CD4-positive, alpha-beta T cell (primary cell): ENCODE measurements at regions of chr2 and their contacts with region 1.

Region 1: DNA sequence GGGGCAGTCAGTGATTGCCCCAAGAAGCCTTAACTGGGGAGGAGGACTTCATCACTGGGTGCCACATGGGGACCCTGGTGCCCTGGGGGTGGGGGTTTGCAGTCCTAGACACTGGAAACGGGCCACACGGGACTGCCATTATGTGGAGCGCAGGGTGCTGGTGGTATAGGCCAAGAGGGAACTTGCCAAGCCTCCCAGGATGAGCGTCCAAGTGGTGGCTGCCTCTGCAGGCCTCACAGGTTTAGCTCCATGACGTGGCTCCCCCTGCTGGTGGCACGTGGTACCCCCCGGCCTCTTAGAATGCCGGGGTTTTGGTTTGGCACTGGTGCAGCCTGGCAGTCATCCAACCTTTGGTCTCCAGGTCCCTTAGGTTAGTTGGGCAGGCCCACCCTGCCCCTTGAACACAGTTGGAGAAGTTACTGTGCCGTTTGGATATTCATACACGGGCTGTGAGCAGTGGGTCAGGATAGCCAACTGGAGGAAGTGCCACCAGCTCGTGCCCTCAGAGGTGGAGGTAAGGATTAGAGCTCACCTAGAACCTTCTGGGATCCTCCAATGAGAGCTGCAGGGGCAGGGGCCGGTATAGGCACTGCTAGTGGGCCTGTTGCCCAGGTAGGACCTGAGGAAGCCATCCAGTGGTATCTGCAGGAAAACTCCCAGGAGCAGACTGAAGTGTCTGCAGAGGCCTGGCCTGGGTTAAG is 5.6 kb downstream of the PTMA start:
- DNase-seq: peak; percentile 86 to 96 (median 92)
- ATAC-seq: peak; percentile 47
- H3K4me3 ChIP-seq: no peak overlapping the region
- H3K4me3 Mint-ChIP-seq: peak overlapping the region; percentile 87
- H3K27ac ChIP-seq: peak overlapping the region; percentile 49 to 57
- H3K27ac Mint-ChIP-seq: peak overlapping the region; percentile 100
- H3K4me1 ChIP-seq: peaks cover 52% of the 10 kb centered on the region
- H3K4me1 Mint-ChIP-seq: peaks cover 42% of the 10 kb centered on the region
- H3K27me3 ChIP-seq: no peaks in the 10 kb centered on the region
- H3K27me3 Mint-ChIP-seq: peaks cover 4% of the 10 kb centered on the region
- CTCF ChIP-seq: peak; percentile 97

Region 2: DNA sequence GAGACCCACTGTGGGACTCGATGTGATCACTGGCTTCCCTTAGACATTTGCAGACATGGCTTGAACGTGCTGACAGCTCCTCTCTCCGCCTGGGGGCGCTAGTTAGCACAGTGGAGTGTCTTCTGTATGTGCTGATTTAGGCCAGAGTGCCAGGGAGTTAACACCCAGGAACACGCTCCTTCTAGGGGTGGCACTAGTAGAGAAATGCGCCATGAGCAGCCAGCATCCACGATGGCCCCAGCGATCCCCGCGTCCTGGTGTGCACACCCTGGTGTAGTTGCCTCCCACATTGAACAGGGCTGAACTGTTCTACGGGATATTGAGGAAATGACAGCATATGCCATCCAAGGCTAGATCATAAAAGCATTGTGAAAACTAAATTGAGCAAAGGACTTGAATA is 172.2 kb before region 1 on chr2:
- CTCF ChIA-PET with region 1: no interaction called
- POLR2A ChIA-PET with region 1: no interaction called
- intact Hi-C with region 1: no loop called
- DNase-seq: no peak
- ATAC-seq: no peak
- H3K4me3 ChIP-seq: no peak overlapping the region
- H3K4me3 Mint-ChIP-seq: no peak overlapping the region
- H3K27ac ChIP-seq: no peak overlapping the region
- H3K27ac Mint-ChIP-seq: no peak overlapping the region
- H3K4me1 ChIP-seq: peaks cover 21% of the 10 kb centered on the region
- H3K4me1 Mint-ChIP-seq: peaks cover 16% of the 10 kb centered on the region
- H3K27me3 ChIP-seq: no peaks in the 10 kb centered on the region
- H3K27me3 Mint-ChIP-seq: no peaks in the 10 kb centered on the region
- CTCF ChIP-seq: no peak

Region 3: DNA sequence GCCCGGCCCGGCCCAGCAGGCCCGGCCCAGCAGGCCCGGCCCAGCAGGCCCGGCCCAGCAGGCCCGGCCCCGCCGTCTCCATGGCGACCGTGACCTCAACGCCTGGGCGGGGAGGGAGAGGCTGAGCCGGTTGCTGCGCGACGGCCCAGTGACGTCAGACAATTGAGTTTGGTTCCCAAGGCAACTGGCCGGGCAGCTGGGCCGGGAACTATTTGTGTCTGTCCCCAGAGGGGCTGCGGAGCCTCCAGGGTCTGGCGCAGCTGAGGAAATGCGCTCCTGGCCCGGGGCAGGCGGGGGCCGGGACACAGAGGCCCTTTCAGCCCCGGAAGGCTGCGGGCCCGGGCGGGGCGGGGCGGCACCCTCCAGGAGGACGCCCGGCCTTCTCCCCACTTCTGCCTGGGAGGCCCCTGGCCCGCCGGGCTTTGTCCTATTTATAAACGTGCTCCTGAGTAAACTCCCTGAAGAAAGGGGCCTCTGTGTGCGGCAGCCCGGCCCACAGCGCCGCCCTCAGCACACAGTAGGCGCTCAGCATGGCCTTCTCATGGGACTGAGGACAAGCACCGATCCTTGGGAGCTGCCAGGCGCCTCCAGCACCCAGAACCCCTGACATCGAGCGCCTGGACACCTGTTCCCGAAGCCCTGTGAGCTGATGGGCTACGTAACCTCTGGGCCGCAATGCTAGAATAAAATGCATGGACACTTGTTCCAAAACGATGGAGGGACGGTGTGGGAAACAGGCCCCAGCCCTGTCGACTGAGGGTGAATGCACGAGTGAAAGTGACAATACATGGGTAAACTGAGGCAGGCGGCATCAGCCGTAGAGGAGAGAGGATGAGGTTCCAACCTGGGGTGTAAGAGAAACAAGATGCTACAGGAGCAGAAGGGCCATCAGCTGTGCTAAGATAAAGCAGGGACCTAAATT is 108.9 kb before region 1 on chr2:
- CTCF ChIA-PET with region 1: interaction called, 53 read pairs
- POLR2A ChIA-PET with region 1: interaction called, 5 read pairs
- intact Hi-C with region 1: no loop called
- DNase-seq: peak; percentile 86 to 99 (median 95)
- ATAC-seq: peak; percentile 79
- H3K4me3 ChIP-seq: peak overlapping the region; percentile 41
- H3K4me3 Mint-ChIP-seq: peak overlapping the region; percentile 65
- H3K27ac ChIP-seq: peak overlapping the region in 1 of 2 donors; percentile 45
- H3K27ac Mint-ChIP-seq: peak overlapping the region; percentile 74
- H3K4me1 ChIP-seq: peaks cover 23% of the 10 kb centered on the region
- H3K4me1 Mint-ChIP-seq: peaks cover 12% of the 10 kb centered on the region
- H3K27me3 ChIP-seq: no peaks in the 10 kb centered on the region
- H3K27me3 Mint-ChIP-seq: no peaks in the 10 kb centered on the region
- CTCF ChIP-seq: no peak

Region 4: DNA sequence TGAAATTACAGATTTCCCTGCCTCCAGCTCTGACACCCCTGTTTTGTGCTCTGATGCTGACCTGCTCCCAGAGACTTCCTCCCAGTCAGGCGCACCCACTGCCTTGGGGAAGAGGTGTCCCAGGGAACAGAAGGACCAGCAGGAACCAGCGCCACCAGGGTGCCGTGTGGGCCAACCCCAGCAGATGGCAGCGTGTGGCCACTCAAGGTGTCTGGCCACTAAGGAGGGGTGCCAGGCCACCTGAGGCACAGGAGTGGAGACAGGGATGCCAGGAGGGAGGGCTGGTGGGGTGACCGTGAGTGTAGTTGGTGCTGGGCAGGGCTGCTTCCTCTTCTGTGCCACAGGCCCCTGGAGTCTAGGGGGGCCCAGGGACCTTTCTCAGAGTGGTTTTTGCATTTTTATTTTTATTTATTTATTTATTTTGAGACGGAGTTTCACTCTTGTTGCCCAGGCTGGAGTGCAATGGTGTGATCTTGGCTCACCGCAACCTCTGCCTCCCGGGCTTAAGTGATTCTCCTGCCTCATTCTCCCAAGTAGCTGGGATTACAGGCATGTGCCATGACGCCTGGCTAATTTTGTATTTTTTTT is 65.2 kb before region 1 on chr2:
- CTCF ChIA-PET with region 1: no interaction called
- POLR2A ChIA-PET with region 1: no interaction called
- intact Hi-C with region 1: loop called (anchors 1 to 2 kb)
- DNase-seq: peak in 10 of 14 experiments; percentile 28 to 73 (median 46)
- ATAC-seq: peak; percentile 72
- H3K4me3 ChIP-seq: no peak overlapping the region
- H3K4me3 Mint-ChIP-seq: no peak overlapping the region
- H3K27ac ChIP-seq: no peak overlapping the region
- H3K27ac Mint-ChIP-seq: no peak overlapping the region
- H3K4me1 ChIP-seq: no peaks in the 10 kb centered on the region
- H3K4me1 Mint-ChIP-seq: peaks cover 4% of the 10 kb centered on the region
- H3K27me3 ChIP-seq: no peaks in the 10 kb centered on the region
- H3K27me3 Mint-ChIP-seq: no peaks in the 10 kb centered on the region
- CTCF ChIP-seq: peak; percentile 48

Region 5: DNA sequence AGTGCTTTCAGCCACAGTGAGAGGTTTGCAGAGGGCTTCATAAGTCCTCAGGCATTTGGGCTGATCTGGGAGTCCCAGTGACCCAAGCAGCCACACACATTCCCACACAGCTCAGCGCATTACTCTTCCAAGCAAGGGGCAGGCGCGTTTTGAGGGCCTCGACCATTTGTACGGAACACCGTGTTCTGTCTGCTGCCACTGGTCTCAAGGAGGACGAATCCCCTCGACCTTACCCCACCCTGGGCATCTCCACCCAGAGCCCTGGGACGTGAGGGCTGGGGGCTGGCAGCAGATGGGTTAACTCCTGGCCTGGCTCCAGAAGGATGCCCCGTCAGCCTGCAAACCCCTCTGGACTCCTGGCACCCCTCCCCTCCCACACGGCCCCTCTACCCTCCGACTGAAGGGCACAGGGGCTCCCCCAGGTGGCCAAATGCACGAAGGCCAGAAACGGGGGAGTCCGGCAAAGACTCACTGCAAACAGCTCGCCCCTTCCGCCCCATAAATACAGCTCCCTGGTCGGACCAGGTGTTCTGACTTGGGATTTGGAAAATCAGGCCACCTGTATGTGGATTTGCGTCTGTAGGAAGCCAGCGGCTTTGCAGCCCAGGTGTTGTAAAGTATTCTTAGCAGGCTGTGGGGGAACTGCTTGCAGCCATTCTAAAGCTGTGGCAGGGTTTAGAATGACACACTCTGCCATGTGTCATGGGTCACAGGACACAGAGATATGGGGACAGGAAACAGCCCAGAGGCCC is 39.1 kb before region 1 on chr2:
- CTCF ChIA-PET with region 1: interaction called, 122 read pairs
- POLR2A ChIA-PET with region 1: interaction called, 62 read pairs
- intact Hi-C with region 1: loop called (anchors 1 kb)
- DNase-seq: peak; percentile 22 to 75 (median 46)
- ATAC-seq: peak; percentile 50
- H3K4me3 ChIP-seq: no peak overlapping the region
- H3K4me3 Mint-ChIP-seq: no peak overlapping the region
- H3K27ac ChIP-seq: no peak overlapping the region
- H3K27ac Mint-ChIP-seq: no peak overlapping the region
- H3K4me1 ChIP-seq: peaks cover 15% of the 10 kb centered on the region
- H3K4me1 Mint-ChIP-seq: peaks cover 5% of the 10 kb centered on the region
- H3K27me3 ChIP-seq: peaks cover 0 to under 1% of the 10 kb centered on the region in 2 experiments
- H3K27me3 Mint-ChIP-seq: peaks cover 4% of the 10 kb centered on the region
- CTCF ChIP-seq: peak; percentile 72

Region 6: DNA sequence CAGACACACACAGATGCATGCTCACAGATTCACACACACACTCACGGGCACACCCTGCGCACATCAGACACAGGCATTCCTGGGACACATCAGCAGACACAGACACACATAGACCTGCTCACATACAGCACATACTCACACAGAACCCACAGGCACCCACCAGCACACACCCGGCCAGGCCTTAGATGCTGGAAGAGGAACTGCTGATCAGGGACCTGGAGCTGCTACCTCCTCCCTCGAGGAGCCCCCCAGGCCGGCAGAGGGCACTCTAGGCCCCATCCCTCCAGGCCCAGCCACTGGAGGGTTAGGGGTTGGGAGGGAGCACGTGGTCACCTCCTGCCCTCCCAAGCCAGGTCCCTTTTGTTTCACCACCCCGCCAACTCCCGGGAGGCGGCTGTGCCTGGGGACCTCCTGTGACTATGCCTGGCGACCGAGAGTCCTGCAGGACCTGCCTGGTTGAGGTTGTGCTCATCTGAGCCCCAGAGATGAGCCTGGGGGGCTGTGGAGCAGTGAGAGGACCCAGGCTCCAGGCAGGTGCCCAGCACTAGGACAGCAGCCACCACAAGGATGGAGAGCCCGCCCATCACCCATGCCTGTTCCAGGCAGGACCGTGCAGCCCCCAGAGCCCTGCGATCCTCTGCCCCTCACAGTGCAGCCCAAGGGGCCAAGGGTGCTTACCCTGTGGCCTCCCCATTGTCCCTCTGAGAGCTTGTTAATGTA is 26.6 kb before region 1 on chr2:
- CTCF ChIA-PET with region 1: interaction called, 54 read pairs
- POLR2A ChIA-PET with region 1: interaction called, 28 read pairs
- intact Hi-C with region 1: loop called in 1 of 2 experiments (anchors 1 kb)
- DNase-seq: peak; percentile 42 to 81 (median 66)
- ATAC-seq: peak; percentile 90
- H3K4me3 ChIP-seq: no peak overlapping the region
- H3K4me3 Mint-ChIP-seq: no peak overlapping the region
- H3K27ac ChIP-seq: no peak overlapping the region
- H3K27ac Mint-ChIP-seq: no peak overlapping the region
- H3K4me1 ChIP-seq: peaks cover 6% of the 10 kb centered on the region
- H3K4me1 Mint-ChIP-seq: peaks cover 5% of the 10 kb centered on the region
- H3K27me3 ChIP-seq: no peaks in the 10 kb centered on the region
- H3K27me3 Mint-ChIP-seq: peaks cover 8% of the 10 kb centered on the region
- CTCF ChIP-seq: peak; percentile 75